Breast epithelium (tissue), 4 donors: ENCODE measurements at regions of chr18 and their contacts with region 1.

Region 1: DNA sequence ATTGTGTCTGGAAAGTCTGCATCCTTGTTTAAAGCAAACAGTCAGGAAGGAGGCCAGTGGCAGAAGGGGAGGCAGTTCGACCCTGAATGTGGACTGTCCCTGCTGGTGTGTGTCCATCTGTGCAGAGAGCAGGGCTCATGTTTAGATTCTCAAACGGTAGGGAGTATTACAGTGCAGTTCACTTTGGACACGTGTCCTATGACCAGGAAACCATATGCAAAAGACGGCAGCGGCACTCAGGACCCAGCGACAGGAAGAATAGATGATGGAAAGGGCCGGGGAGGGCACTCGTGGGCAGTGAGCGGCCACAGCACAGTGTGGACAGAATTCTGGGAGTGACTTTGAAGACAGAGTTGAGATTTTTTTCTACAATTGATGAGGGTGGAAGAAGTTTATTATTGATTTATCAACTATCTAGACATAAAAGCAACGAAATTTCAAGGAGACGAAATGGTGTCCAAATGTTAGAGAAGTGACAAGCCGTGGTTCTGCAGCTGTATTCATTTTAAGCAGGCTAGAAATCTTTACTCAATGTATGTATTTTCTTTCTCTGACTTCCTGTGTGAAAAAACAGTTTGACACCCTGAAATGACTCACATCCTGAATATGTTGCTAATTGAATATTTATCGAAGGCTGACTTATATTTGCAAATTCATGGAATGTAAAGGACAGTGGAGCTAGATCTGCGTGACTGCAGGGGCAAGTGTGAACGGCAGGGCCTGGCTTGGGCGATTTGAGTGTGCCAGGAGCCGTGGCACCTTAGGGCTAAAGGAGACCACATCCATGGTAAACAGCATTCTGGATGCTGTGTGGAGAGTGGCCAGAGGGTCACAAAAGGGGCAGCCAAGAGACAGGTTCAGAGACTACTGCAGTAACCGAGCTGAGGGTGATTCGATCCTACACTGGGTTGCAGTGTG is 214.2 kb downstream of the PTGR3 start:
- DNase-seq: no peak
- H3K4me3 ChIP-seq: no peak overlapping the region
- H3K27ac ChIP-seq: no peak overlapping the region
- H3K4me1 ChIP-seq: no peaks in the 10 kb centered on the region
- H3K27me3 ChIP-seq: no peaks in the 10 kb centered on the region
- CTCF ChIP-seq: no peak
- POLR2A ChIP-seq: no peak

Region 2: DNA sequence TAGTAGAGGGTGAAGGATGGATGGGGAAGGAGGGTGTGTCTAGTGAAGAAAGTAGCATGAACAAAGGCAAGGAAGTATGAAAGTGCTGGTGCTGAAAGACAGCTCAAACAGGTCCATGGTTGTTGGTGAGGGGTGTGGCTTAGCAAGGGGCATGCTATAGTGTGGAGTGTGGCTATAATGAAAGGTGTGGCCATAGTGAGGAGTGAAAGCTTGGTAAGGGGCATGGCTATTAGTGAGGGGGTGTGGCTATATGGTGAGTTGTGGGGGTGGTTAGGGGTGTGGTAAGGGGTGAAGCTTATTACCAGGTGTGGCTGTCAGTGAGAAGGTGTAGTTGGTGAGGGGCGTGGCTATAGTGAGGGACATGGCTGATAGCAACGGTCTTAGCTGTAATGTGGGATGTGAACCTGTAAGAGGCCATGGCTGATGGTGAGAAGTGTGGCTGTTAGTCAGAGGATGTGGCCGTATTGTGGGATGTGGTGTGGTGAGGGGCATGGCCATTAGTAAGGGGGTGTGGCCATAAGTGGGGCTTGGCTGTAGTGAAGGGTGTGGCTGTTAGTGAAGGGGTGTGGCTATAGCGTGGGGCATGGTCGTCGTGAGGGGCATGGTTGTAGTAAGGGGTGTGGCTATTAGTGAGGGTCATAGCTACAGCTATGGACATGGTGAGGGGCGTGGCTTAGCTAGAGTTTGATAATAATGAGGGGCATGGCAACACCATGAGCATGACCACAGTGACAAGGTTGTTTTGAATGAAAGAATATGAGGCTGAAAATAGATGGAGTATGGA is 1396.7 kb before region 1 on chr18:
- intact Hi-C with region 1: loop called (anchors 10 kb)
- DNase-seq: no peak
- H3K4me3 ChIP-seq: no peak overlapping the region
- H3K27ac ChIP-seq: no peak overlapping the region
- H3K4me1 ChIP-seq: no peaks in the 10 kb centered on the region
- H3K27me3 ChIP-seq: no peaks in the 10 kb centered on the region
- CTCF ChIP-seq: no peak
- POLR2A ChIP-seq: no peak

Region 3: DNA sequence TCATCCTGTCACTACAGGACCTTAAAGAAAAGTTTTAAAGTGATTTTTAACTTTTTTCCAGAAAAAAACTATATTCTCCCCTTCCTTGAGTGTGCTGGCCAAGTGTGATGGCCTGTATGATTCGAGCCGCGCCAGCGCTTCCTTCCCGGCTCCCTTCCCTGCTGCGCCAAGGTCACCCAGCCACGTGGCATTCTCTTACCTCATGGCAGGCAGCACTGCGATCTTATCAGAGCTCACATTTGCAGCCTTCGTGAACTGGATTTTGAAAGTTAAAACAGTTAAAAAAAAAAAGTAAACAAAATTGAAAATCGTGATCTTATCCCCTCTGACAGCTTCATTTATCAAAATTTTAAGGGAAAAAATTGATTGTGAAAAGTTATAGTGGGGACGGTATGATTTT is 65.7 kb before region 1 on chr18:
- intact Hi-C with region 1: loop called (anchors 2 kb)
- DNase-seq: peak; percentile 18 to 55
- H3K4me3 ChIP-seq: no peak overlapping the region
- H3K27ac ChIP-seq: no peak overlapping the region
- H3K4me1 ChIP-seq: no peaks in the 10 kb centered on the region
- H3K27me3 ChIP-seq: no peaks in the 10 kb centered on the region
- CTCF ChIP-seq: no peak
- POLR2A ChIP-seq: no peak

Region 4: DNA sequence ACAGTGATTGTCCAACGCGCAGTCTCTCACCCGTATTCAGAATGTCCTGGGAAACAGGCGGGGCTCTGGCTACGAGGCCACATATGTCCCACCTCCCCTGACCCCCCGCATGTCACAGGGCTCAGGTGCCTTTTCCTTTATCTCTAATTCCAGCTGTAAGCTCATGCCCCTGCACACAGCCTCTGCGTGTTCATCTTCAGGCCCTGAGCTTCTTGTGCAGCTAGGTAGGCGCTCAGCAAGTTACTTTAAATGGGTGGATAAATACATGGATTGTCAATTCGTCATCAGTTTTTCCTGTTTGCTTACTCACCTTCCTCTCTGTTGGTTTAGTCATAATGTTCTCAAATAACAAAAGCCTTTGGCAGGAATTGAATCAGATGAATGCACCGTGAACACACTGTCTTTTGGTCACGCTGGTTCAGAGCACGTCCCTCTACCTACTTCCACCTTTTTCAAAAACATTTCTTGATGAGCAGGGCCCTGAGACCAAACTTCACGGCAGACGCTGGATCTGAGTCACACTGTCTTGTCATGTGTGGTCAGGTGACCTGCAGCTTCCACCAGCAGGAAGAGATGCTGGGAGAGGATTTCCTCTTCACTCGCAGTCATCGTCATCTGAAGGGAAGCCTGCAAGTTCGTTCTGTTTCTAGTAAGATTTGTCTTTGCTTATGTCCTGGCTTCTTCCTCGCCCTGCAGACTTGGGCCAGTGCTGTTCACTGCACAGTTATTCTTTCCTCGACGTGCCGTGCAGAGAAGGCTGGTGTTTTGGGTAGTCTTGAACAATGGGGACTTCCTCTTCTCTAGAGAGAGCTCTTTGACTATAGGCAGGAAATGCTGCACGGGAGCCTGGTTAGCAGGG is 76.1 kb after region 1 on chr18:
- intact Hi-C with region 1: no loop called
- DNase-seq: peak in 1 of 2 donors; percentile 30
- H3K4me3 ChIP-seq: peak overlapping the region in 2 of 3 donors; percentile 2 to 26
- H3K27ac ChIP-seq: peak overlapping the region; percentile 31 to 84
- H3K4me1 ChIP-seq: no peaks in the 10 kb centered on the region
- H3K27me3 ChIP-seq: no peaks in the 10 kb centered on the region
- CTCF ChIP-seq: no peak
- POLR2A ChIP-seq: no peak